Vagina (tissue), 2 donors: ENCODE measurements at regions of chr16 and their contacts with region 1.

Region 1: GRCh38 chr16:12067714-12068401 is 91.3 kb downstream of the SNX29 start:
- DNase-seq: no peak
- H3K4me3 ChIP-seq: no peak overlapping the region
- H3K27ac ChIP-seq: no peak overlapping the region
- H3K4me1 ChIP-seq: peaks cover 12% of the 10 kb centered on the region
- H3K27me3 ChIP-seq: no peaks in the 10 kb centered on the region
- CTCF ChIP-seq: peak; percentile 79 to 93 (median 89)
- POLR2A ChIP-seq: no peak

Region 2: GRCh38 chr16:11797166-11797956 is 270.5 kb before region 1 on chr16 and contains the start of gene ZC3H7A:
- intact Hi-C with region 1: no loop called
- DNase-seq: peak; percentile 97
- H3K4me3 ChIP-seq: peak within 1 kb of the TSS; percentile 70 to 100
- H3K27ac ChIP-seq: peak within 1 kb of the TSS; percentile 100
- H3K4me1 ChIP-seq: peaks cover 68% of the 10 kb centered on the region
- H3K27me3 ChIP-seq: no peaks in the 10 kb centered on the region
- CTCF ChIP-seq: peak; percentile 49 to 58 (median 54)
- POLR2A ChIP-seq: peak in 1 of 2 donors; percentile 65
- total RNA-seq, gene ZC3H7A: 67.5 TPM

Region 3: DNA sequence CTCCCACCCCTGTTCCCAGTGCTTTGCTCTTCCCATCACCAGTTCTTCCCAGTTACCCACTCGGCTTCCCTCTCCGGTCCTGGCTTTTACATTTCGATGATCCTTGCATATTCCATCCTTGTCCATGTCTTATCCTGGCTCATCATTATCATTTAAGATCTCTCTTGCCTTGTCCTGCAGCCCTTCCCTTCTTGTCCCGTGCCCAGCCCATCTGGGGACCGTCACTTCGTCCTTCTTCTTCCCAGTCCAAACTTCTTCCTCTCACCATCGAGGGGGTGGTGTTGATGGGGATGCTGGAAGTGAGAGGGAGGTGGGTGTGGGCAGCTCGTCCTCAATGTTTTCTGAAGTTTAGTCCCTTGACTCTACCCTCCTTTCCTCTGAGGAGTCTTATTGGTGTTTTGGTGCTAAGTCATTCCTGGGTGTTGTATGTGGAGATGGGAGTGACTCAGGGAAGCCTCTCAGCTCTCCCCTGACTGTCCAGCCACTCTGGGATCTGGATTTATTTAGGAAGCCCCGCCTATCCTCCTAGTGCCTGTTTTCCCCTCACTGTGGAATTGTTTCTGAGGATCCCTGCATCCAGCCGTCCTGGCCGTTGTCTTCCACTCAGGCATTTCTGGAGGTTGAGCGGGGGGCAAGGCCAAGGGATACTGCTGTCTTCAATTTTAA is 90.3 kb before region 1 on chr16:
- intact Hi-C with region 1: loop called (anchors 10 kb)
- DNase-seq: peak in 1 of 2 donors; percentile 88
- H3K4me3 ChIP-seq: peak overlapping the region; percentile 90 to 97
- H3K27ac ChIP-seq: peak overlapping the region; percentile 92
- H3K4me1 ChIP-seq: peaks cover 28% of the 10 kb centered on the region
- H3K27me3 ChIP-seq: no peaks in the 10 kb centered on the region
- CTCF ChIP-seq: no peak
- POLR2A ChIP-seq: no peak